Spleen (tissue), 13 donors: ENCODE measurements at regions of chr15 and their contacts with region 1.

Region 1: GRCh38 chr15:92077353-92078085 is 224.0 kb downstream of the SLCO3A1 start:
- DNase-seq: no peak
- H3K4me3 ChIP-seq: no peak overlapping the region
- H3K27ac ChIP-seq: peak overlapping the region in 2 of 8 donors; percentile 30 to 36
- H3K4me1 ChIP-seq: peaks cover 19 to 71% (median 42%) of the 10 kb centered on the region in 6 donors
- H3K27me3 ChIP-seq: no peaks in the 10 kb centered on the region
- CTCF ChIP-seq: peak; percentile 31 to 76 (median 64)
- POLR2A ChIP-seq: no peak

Region 2: GRCh38 chr15:91302588-91303439 is 774.7 kb before region 1 on chr15:
- intact Hi-C with region 1: loop called (anchors 5 kb)
- DNase-seq: no peak
- H3K4me3 ChIP-seq: no peak overlapping the region
- H3K27ac ChIP-seq: no peak overlapping the region
- H3K4me1 ChIP-seq: peaks cover 0 to 19% (median 6%) of the 10 kb centered on the region in 6 donors
- H3K27me3 ChIP-seq: peaks cover 0 to 60% (median 10%) of the 10 kb centered on the region in 7 donors
- CTCF ChIP-seq: peak; percentile 37 to 78 (median 67)
- POLR2A ChIP-seq: no peak

Region 3: DNA sequence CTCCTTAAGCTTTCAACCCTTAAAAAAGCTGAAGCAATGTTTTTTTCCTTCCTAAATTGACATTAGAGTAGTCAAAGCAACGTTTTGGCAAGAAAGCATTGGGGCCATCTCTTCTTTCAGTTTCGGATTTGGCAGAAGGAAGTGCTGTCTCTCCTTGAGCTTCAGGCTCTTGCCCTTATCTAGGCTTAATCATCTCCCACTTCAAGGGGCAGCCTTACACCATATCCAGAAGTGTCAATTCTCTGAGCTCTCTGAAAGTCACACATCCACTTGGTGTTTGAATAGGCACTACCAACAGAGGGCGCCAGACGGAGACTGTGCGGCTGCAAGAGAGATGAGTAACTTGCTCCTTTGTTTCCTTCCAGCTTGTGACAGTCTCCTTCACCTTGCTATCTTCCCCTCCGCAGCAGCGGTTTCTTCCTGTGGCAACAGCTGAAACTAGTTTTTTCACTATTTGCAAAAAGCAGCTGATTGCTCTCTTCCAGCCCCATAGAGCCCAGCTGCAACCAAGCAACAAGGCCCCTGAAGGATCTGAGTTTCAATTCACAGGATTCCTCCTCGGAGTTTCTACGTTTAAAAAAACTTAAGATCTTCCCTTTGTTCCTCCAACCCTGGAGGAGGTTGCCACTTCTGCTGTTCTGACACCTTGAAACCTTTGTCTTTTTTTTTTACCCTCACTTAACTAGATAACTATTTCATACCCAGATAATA is 371.0 kb before region 1 on chr15:
- intact Hi-C with region 1: loop called (anchors 10 kb)
- DNase-seq: peak; percentile 85
- H3K4me3 ChIP-seq: no peak overlapping the region
- H3K27ac ChIP-seq: peak overlapping the region in 6 of 8 donors; percentile 8 to 47 (median 37)
- H3K4me1 ChIP-seq: peaks cover 3 to 19% (median 14%) of the 10 kb centered on the region in 6 donors
- H3K27me3 ChIP-seq: no peaks in the 10 kb centered on the region
- CTCF ChIP-seq: peak; percentile 30 to 85 (median 69)
- POLR2A ChIP-seq: no peak

Region 4: GRCh38 chr15:91852741-91853510 is 224.6 kb before region 1 on chr15:
- intact Hi-C with region 1: loop called (anchors 5 kb)
- DNase-seq: peak; percentile 94
- H3K4me3 ChIP-seq: peak overlapping the region; percentile 46 to 89 (median 67)
- H3K27ac ChIP-seq: peak overlapping the region; percentile 53 to 99 (median 92)
- H3K4me1 ChIP-seq: peaks cover 18 to 79% (median 52%) of the 10 kb centered on the region in 6 donors
- H3K27me3 ChIP-seq: peaks cover 0 to 76% (median 3%) of the 10 kb centered on the region in 7 donors
- CTCF ChIP-seq: peak; percentile 48 to 90 (median 81)
- POLR2A ChIP-seq: no peak

Region 5: DNA sequence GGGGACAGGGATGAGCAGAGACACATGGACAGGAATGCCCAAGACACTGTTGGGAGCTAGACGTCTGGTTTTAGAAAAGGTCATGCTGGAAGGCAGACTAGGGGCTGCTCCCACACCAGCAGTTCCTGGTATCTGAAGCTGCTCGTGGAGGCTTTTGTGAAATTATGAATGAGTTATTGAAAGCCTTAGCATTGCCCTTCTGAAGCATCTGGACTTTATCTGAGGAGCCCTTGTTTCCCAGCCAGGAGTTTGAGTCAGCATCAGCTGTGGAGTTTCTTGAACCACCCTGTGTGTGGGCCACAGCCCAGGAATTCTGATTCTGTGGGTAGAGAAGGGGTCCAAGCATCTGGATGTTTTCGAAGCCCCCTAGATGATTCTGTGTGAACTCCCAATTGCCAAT is 34.7 kb after region 1 on chr15:
- intact Hi-C with region 1: no loop called
- DNase-seq: no peak
- H3K4me3 ChIP-seq: no peak overlapping the region
- H3K27ac ChIP-seq: no peak overlapping the region
- H3K4me1 ChIP-seq: peaks cover 0 to 19% (median 0%) of the 10 kb centered on the region in 6 donors
- H3K27me3 ChIP-seq: no peaks in the 10 kb centered on the region
- CTCF ChIP-seq: no peak
- POLR2A ChIP-seq: no peak